PC-9 (cell line): ENCODE measurements at regions of chr14 and their contacts with region 1.

Region 1: GRCh38 chr14:93263416-93263815 is 56.4 kb downstream of the UBR7 start:
- DNase-seq: no peak
- H3K4me3 ChIP-seq: no peak overlapping the region
- H3K27ac ChIP-seq: no peak overlapping the region
- H3K4me1 ChIP-seq: peaks cover 59% of the 10 kb centered on the region
- H3K27me3 ChIP-seq: no peaks in the 10 kb centered on the region
- CTCF ChIP-seq: no peak

Region 2: GRCh38 chr14:92866181-92866752 is 397.1 kb before region 1 on chr14:
- CTCF ChIA-PET with region 1: no interaction called
- POLR2A ChIA-PET with region 1: no interaction called
- intact Hi-C with region 1: no loop called
- DNase-seq: no peak
- H3K4me3 ChIP-seq: no peak overlapping the region
- H3K27ac ChIP-seq: no peak overlapping the region
- H3K4me1 ChIP-seq: no peaks in the 10 kb centered on the region
- H3K27me3 ChIP-seq: peaks cover 28% of the 10 kb centered on the region
- CTCF ChIP-seq: no peak

Region 3: DNA sequence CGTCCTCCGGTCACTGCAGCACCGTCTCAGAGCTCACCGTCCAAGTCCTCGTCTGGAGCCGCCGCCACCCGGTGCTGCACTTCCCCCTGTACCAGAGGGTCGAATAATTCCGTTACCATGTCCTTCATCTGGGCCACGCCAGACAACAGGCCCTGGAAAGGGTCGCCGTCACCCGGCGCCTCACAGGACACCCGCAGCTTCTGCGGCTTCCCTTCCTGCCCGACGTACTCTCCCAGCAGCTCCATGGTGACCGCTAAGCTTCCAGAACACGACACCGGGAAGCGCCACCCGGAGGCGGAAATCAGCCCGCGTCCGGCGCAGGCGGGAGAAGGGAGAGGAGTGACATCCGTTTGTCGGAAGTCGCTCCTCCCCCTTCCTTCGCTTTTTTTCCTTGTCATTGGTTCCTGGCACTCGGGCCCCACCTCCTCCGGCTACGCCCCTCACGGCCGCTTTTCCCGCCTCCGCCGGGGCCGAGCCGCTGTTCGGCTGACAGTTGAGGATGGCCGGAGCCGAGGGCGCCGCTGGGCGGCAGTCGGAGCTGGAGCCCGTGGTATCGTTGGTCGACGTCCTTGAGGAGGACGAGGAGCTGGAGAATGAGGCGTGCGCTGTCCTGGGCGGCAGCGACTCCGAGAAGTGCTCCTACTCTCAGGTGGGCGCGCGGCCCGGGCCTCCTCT is 56.5 kb before region 1 on chr14 and contains the starts of genes GON7 and UBR7:
- CTCF ChIA-PET with region 1: no interaction called
- POLR2A ChIA-PET with region 1: no interaction called
- intact Hi-C with region 1: no loop called
- DNase-seq: peak; percentile 92 to 93
- H3K4me3 ChIP-seq: peak within 1 kb of the TSS; percentile 100
- H3K27ac ChIP-seq: peak within 1 kb of the TSS; percentile 63
- H3K4me1 ChIP-seq: peaks cover 23% of the 10 kb centered on the region
- H3K27me3 ChIP-seq: no peaks in the 10 kb centered on the region
- CTCF ChIP-seq: no peak
- total RNA-seq, gene GON7: 6.4 and 9.3 TPM in 2 replicates
- total RNA-seq, gene UBR7: 9.3 and 14.3 TPM in 2 replicates

Region 4: DNA sequence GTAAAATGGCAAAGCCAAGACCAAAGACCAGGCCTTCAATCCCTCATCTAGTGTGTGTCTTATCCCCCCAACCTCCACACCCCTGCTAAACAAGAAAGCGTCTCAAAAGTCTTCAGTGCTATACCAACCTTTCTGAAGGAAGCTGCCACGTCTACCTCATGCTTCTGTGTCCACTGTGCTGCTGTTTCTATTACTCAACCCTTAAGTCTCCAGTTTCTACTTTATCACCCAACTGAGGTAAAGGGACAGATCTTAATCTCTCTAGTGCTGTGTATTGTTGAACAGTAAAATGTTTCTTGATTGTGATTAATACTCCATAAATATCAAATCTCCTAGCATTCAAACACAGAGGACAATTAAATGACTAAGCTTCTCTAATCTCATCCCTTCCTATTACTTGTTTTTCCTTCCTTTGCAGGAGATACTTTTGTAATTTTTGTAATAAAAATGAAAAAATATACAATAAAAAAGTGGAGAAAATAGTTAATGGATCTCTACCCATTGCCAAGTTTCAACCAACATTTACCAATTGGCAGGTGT is 46.1 kb after region 1 on chr14:
- CTCF ChIA-PET with region 1: no interaction called
- POLR2A ChIA-PET with region 1: no interaction called
- intact Hi-C with region 1: loop called (anchors 2 kb)
- DNase-seq: peak in 1 of 2 experiments; percentile 65
- H3K4me3 ChIP-seq: no peak overlapping the region
- H3K27ac ChIP-seq: no peak overlapping the region; the same call in 1 of the 2 replicates
- H3K4me1 ChIP-seq: peaks cover 17% of the 10 kb centered on the region; the same call in 1 of the 2 replicates
- H3K27me3 ChIP-seq: no peaks in the 10 kb centered on the region
- CTCF ChIP-seq: no peak

Region 5: DNA sequence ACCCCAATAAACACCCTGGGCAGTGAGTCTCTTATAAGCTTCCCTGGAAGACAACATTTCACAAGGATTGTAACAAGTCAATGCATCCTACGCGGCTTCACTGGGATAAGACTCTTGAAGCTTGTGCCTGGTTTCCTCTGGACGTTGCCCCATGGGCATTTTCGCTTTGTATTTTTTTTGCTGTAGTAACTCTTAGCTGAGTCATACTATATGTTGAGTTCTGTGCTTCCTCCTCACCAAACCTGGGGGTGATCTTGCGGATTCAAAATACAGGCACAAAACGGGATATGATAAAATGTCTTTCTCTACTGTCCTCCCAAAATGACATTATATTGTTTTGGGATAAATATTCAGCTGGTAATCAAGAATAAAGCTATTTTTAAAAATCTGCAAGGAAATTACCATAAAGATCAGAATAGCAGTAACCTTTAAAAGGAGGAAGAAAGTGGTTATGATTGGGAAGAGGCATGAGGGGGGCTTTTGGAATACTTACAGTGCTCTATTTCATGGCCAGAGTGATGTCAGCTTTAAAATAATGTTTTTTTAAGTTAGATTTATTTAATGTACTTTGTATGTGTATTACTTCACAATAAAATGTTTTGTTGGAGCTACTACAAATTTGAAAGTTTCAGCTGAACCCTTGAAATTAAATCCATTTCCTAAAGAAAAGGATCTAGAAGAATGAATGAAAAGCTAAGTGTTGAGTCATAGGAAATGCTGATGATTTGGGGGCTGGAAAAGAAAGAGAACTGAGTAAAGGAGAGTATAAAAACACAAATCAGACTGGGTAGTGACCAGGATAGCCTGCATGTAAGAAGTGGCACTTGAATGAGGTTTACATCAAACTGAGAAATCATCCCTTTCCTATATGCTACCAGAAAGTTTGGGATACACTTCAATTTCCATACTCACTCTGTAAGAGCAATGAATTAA is 54.7 kb after region 1 on chr14:
- CTCF ChIA-PET with region 1: no interaction called
- POLR2A ChIA-PET with region 1: no interaction called
- intact Hi-C with region 1: loop called (anchors 2 kb)
- DNase-seq: peak; percentile 37 to 53
- H3K4me3 ChIP-seq: no peak overlapping the region
- H3K27ac ChIP-seq: peak overlapping the region; percentile 18; the same call in 1 of the 2 replicates
- H3K4me1 ChIP-seq: peaks cover 9% of the 10 kb centered on the region
- H3K27me3 ChIP-seq: no peaks in the 10 kb centered on the region
- CTCF ChIP-seq: no peak

Region 6: GRCh38 chr14:93331728-93332396 is 68.4 kb after region 1 on chr14:
- CTCF ChIA-PET with region 1: no interaction called
- POLR2A ChIA-PET with region 1: interaction called, 4 read pairs
- intact Hi-C with region 1: loop called (anchors 1 kb)
- DNase-seq: no peak
- H3K4me3 ChIP-seq: peak overlapping the region; percentile 71
- H3K27ac ChIP-seq: peak overlapping the region; percentile 82
- H3K4me1 ChIP-seq: peaks cover 37% of the 10 kb centered on the region
- H3K27me3 ChIP-seq: no peaks in the 10 kb centered on the region
- CTCF ChIP-seq: no peak